Sigmoid colon (tissue), 7 donors: ENCODE measurements at regions of chr12 and their contacts with region 1.

Region 1: DNA sequence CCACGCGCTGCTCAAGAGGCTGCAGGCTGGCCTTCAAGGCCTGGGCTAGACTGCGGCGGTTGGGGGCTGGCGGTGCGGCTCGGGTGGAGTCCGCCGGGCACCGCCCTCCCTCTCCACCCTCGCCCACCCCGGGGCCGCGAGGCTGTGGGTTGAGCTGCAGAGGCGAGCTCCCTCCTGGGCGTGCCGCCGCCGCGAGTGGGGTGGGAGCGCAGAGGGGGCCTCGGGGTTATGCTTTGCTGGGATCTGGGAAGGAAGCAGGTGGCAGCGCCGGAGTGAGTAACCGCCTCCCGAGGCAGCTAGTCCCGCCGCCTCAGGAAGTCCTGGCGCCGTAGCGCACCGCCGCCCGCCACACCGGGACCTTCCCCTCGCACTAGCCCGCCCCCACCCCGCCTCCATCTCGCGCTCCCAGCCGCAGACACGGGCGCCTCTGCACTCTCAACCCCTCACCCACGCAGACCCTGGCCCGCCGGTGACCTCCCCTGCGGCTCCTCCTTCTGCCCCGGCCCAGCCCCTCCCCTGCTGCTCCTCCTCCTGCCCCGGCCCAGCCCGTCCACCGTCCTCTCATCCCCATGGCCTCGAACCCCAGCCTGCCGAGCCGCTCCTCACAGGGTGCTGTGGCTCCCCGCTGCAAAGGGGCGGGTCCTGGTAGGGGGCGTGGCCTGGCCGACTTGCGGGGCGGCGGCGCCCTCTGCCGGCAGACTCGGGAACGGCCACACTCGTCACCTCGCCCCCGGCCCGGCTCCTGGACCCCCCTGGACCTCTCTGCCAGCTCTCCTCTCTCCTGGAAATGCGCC is 16.6 kb downstream of the TAMALIN start:
- DNase-seq: peak; percentile 94
- H3K4me3 ChIP-seq: peak overlapping the region; percentile 40 to 61 (median 54)
- H3K27ac ChIP-seq: peak overlapping the region; percentile 41 to 90 (median 84)
- H3K4me1 ChIP-seq: peaks cover 0 to 49% (median 47%) of the 10 kb centered on the region in 4 donors
- H3K27me3 ChIP-seq: no peaks in the 10 kb centered on the region
- CTCF ChIP-seq: peak; percentile 97 to 98 (median 98)
- EP300 ChIP-seq: no peak
- POLR2A ChIP-seq: no peak

Region 2: DNA sequence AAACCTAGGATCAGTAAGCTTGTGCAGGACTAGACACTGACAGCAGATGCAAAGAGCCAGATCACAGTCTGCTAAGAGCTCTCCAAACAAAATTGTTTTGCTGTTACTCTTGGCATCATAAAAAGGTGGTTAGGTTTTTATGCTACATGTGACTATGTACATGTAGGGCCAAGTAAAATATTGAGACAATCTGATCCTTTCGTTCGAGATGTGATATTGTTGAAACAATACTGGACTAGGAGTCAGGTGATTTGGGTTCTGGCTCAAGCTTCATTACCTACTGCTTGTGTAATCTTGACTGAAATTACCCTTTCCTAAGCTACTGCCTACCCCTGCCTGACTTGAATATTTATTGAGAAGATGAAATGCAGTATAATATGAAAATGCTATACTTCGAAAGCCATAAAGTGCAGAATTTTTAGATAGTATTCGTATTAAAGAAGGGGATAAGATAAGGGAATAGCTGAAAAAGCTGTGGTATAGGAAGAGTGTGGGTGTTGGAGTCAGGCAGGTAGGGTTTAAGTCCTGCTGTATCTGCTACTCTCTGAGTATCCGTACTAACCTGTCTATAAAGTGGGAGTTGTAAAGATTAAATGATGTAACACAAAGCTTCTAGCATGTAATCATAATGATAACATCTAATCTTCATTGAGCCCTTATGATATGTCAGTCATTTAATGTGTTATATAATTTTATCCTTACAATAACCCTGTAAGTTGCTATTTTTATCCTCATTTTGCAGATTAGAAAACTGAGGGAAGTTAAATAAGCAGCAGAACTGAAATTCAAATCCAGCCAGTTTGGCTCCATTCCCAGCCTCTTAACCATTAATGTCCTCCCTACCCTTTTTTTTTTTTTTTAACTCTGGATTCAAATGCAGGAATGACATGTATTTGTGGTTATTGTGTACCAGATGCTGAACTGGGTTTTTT is 1298.1 kb before region 1 on chr12:
- intact Hi-C with region 1: no loop called
- DNase-seq: no peak
- H3K4me3 ChIP-seq: no peak overlapping the region
- H3K27ac ChIP-seq: peak overlapping the region in 1 of 4 donors; percentile 34
- H3K4me1 ChIP-seq: peaks cover 0 to 6% (median 0%) of the 10 kb centered on the region in 4 donors
- H3K27me3 ChIP-seq: no peaks in the 10 kb centered on the region
- CTCF ChIP-seq: no peak
- EP300 ChIP-seq: no peak
- POLR2A ChIP-seq: no peak

Region 3: DNA sequence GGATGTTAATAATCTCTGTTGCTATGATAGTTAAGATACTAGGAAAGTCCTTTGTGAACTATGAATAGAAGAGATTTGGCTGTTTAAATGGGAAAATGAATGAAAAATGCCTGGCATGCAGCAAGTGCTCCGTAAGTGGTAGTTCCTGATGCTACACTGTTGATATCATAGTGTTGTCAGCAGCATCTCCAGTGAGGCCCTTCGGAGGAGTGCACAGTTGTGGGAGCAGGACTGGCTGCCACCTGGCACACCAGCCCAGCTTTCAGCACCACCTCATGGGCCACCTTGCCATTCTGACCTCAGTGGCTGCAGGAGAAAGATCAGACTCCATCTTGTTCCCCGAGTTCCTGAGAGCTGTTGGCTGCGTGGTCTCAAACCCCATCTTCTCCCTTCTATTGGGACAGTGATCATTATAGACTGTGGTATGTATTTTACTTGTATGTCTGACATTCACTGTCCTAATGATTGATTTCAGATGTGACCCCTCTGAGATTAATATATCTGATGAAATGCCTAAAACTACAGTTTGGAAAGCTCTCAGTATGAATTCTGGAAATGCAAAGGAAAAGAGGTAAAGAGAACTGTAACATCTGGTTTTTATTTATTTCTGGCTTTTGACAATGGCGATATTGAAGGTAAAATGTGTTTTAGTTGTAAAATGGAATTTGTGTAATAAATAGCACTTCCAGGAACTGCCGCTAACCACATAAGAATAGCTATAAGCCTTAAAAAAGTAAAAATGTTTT is 517.8 kb before region 1 on chr12:
- intact Hi-C with region 1: no loop called
- DNase-seq: no peak
- H3K4me3 ChIP-seq: no peak overlapping the region
- H3K27ac ChIP-seq: no peak overlapping the region
- H3K4me1 ChIP-seq: no peaks in the 10 kb centered on the region
- H3K27me3 ChIP-seq: no peaks in the 10 kb centered on the region
- CTCF ChIP-seq: no peak
- EP300 ChIP-seq: no peak
- POLR2A ChIP-seq: no peak

Region 4: GRCh38 chr12:51959211-51959610 is 64.2 kb before region 1 on chr12:
- intact Hi-C with region 1: no loop called
- DNase-seq: peak; percentile 77
- H3K4me3 ChIP-seq: no peak overlapping the region
- H3K27ac ChIP-seq: peak overlapping the region in 3 of 4 donors; percentile 7 to 25 (median 12)
- H3K4me1 ChIP-seq: peaks cover 0 to 50% (median 31%) of the 10 kb centered on the region in 4 donors
- H3K27me3 ChIP-seq: no peaks in the 10 kb centered on the region
- CTCF ChIP-seq: no peak
- EP300 ChIP-seq: no peak
- POLR2A ChIP-seq: no peak

Region 5: DNA sequence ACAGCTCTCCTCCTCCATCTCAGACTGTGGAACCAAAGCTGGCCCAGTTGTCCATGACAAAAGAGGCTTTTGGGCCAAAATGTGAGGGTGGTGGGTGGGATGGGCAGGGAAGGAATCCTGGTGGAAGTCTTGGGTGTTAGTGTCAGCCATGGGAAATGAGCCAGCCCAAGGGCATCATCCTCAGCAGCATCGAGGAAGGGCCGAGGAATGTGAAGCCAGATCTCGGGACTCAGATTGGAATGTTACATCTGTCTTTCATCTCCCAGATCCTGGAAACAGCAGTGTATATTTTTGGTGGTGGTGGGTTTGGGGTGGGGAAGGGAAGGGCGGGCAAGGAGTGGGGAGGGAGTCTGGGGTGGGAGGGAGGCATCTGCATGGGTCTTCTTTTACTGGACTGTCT is 28.4 kb before region 1 on chr12:
- intact Hi-C with region 1: loop called (anchors 1 kb)
- DNase-seq: no peak
- H3K4me3 ChIP-seq: no peak overlapping the region
- H3K27ac ChIP-seq: no peak overlapping the region
- H3K4me1 ChIP-seq: no peaks in the 10 kb centered on the region
- H3K27me3 ChIP-seq: no peaks in the 10 kb centered on the region
- CTCF ChIP-seq: no peak
- EP300 ChIP-seq: no peak
- POLR2A ChIP-seq: no peak

Region 6: GRCh38 chr12:52004042-52004648 is 19.2 kb before region 1 on chr12:
- intact Hi-C with region 1: loop called (anchors 1 kb)
- DNase-seq: peak; percentile 82
- H3K4me3 ChIP-seq: no peak overlapping the region
- H3K27ac ChIP-seq: no peak overlapping the region
- H3K4me1 ChIP-seq: peaks cover 0 to 27% (median 19%) of the 10 kb centered on the region in 4 donors
- H3K27me3 ChIP-seq: peaks cover 12 to 43% (median 37%) of the 10 kb centered on the region in 3 donors
- CTCF ChIP-seq: peak; percentile 29 to 69 (median 64)
- EP300 ChIP-seq: no peak
- POLR2A ChIP-seq: no peak

Region 7: GRCh38 chr12:52069327-52070184 is 46.2 kb after region 1 on chr12 and contains the start of gene ATG101:
- intact Hi-C with region 1: loop called (anchors 1 kb)
- DNase-seq: peak; percentile 96
- H3K4me3 ChIP-seq: peak within 1 kb of the TSS; percentile 80 to 97 (median 88)
- H3K27ac ChIP-seq: peak within 1 kb of the TSS; percentile 87 to 92 (median 89)
- H3K4me1 ChIP-seq: peaks cover 0 to 35% (median 18%) of the 10 kb centered on the region in 4 donors
- H3K27me3 ChIP-seq: no peaks in the 10 kb centered on the region
- CTCF ChIP-seq: peak; percentile 31 to 55 (median 42)
- EP300 ChIP-seq: peak in 1 of 4 donors; percentile 46
- POLR2A ChIP-seq: peak; percentile 71 to 77
- total RNA-seq, gene ATG101: 30.2 to 48.7 (median 38.2) TPM

Region 8: DNA sequence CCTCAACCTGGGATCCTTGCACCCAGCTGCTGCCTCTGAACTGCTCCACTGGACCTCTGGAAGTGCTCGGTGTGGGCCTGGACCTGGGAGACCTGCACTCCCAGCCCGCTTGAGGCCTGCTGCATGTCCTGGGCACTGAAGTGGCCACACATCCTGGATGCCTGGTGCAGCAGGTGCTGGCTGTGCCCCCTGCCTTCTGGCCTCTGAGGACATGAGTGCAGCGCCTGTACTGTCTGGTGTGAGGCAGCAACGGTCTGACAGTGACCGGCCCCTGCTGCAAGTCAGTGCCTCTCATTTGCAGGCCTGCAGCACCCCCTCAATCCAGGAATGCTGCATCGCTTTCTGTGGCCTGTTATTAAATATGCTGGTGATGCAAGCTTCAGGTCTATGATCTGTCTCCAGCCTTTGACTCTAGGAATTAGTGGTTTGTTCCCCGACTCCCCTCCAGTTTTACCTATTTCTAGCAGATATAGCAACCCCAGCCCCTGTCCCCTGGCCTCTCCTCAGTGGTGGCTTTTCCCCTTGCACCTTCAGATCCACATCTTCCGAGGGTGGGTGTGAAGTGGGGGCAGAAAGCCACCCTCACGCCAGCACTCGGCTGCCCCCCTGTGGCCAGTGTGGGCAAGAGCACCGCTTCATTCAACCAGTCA is 59.7 kb after region 1 on chr12:
- intact Hi-C with region 1: loop called (anchors 1 kb)
- DNase-seq: peak; percentile 81
- H3K4me3 ChIP-seq: no peak overlapping the region
- H3K27ac ChIP-seq: peak overlapping the region; percentile 54 to 79 (median 62)
- H3K4me1 ChIP-seq: peaks cover 0 to 27% (median 7%) of the 10 kb centered on the region in 4 donors
- H3K27me3 ChIP-seq: peaks cover 0 to under 1% (median 0%) of the 10 kb centered on the region in 3 donors
- CTCF ChIP-seq: peak; percentile 91 to 98 (median 98)
- EP300 ChIP-seq: no peak
- POLR2A ChIP-seq: no peak

Region 9: GRCh38 chr12:52278541-52279421 is 255.4 kb after region 1 on chr12:
- intact Hi-C with region 1: loop called (anchors 10 kb)
- DNase-seq: peak; percentile 89
- H3K4me3 ChIP-seq: peak overlapping the region in 3 of 4 donors; percentile 31 to 44 (median 38)
- H3K27ac ChIP-seq: peak overlapping the region; percentile 84 to 95 (median 86)
- H3K4me1 ChIP-seq: peaks cover 0 to 34% (median 32%) of the 10 kb centered on the region in 4 donors
- H3K27me3 ChIP-seq: no peaks in the 10 kb centered on the region
- CTCF ChIP-seq: peak; percentile 72 to 94 (median 91)
- EP300 ChIP-seq: no peak
- POLR2A ChIP-seq: no peak